Head of caudate nucleus (tissue), 42 donors: ENCODE measurements at regions of chr14 and their contacts with region 1.

Region 1: GRCh38 chr14:91177073-91178034 is 63.5 kb downstream of the DGLUCY start:
- DNase-seq: peak in 37 of 42 donors; percentile 27 to 80 (median 53)

Region 2: GRCh38 chr14:90615517-90616060 is 561.8 kb before region 1 on chr14:
- intact Hi-C with region 1: no loop called
- DNase-seq: peak in 2 of 42 donors; percentile 36 to 43

Region 3: DNA sequence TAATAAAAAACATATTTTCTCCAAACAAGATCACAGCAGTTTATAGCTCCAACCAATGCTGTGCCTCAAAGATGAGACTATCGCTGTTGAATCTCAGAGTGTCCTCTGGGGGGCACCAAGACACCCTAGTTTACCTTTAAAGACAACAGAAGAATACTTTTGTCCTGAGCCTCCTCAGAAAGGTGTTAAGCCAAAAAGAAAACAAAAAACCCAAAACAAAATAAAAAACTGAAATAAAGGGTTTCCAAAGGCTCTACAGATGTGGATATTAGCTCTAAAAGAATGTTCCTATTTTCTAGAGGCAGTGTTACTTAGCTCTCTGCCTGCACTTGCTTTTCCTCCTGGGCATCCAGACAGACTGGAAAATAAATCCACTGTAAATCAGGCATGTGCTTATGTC is 274.3 kb before region 1 on chr14:
- intact Hi-C with region 1: loop called (anchors 5 kb)
- DNase-seq: peak in 41 of 42 donors; percentile 27 to 88 (median 73)

Region 4: DNA sequence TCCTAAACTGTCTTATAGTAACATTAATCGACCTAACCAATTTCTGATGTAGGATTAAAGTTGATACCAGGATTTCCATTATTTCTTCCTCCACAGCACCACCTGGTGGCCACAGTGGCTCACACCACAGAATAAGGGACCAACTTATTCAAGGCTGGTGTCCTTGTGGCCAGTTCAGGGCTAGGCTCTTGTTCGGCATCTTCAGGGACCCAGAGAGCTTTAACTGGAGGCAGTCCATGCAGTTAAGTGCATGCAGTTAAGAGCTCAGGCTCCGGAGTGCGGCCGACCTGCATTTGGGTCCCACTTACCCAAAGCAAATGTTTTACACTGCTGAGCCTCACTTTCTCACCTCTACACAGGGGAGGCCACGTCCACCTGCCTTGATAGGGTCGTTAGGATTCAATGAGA is 109.2 kb after region 1 on chr14:
- intact Hi-C with region 1: loop called (anchors 5 kb)
- DNase-seq: peak in 41 of 42 donors; percentile 55 to 91 (median 80)